Calu3 (cell line): ENCODE measurements at regions of chr3 and their contacts with region 1.

Region 1: GRCh38 chr3:185815391-185816282 is 9.2 kb downstream of the IGF2BP2 start:
- DNase-seq: no peak
- H3K4me3 Mint-ChIP-seq: peak overlapping the region; percentile 17
- H3K27ac Mint-ChIP-seq: peak overlapping the region; percentile 28
- H3K4me1 Mint-ChIP-seq: peaks cover 72% of the 10 kb centered on the region
- H3K27me3 Mint-ChIP-seq: no peaks in the 10 kb centered on the region
- CTCF ChIP-seq: no peak

Region 2: DNA sequence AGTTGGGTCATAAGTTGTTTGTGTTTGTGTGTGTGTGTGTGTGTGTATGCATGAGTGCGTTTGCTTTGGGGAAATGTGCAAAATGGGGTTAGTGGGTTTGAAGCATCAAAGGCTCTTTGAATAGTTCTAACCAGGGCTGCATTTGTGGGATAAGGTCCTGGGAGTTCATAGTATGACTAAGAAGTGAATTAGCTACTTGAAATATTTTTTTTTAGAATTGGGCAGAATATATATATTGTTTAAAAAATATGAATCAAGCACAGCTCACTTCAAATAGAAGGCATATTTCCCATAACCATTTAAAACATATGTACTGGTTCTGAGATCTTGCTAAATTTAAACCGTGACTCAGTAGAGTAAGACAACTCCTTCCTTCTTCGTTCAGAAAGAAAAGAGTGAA is 33.9 kb before region 1 on chr3:
- CTCF ChIA-PET with region 1: no interaction called
- intact Hi-C with region 1: loop called (anchors 5 kb)
- DNase-seq: no peak
- H3K4me3 Mint-ChIP-seq: no peak overlapping the region
- H3K27ac Mint-ChIP-seq: no peak overlapping the region
- H3K4me1 Mint-ChIP-seq: peaks cover 76% of the 10 kb centered on the region
- H3K27me3 Mint-ChIP-seq: no peaks in the 10 kb centered on the region
- CTCF ChIP-seq: no peak

Region 3: GRCh38 chr3:185796431-185797107 is 19.1 kb before region 1 on chr3:
- CTCF ChIA-PET with region 1: interaction called, 3 read pairs
- intact Hi-C with region 1: loop called (anchors 2 kb)
- DNase-seq: peak; percentile 73
- H3K4me3 Mint-ChIP-seq: peak overlapping the region; percentile 49
- H3K27ac Mint-ChIP-seq: peak overlapping the region; percentile 98
- H3K4me1 Mint-ChIP-seq: peaks cover 73% of the 10 kb centered on the region
- H3K27me3 Mint-ChIP-seq: no peaks in the 10 kb centered on the region
- CTCF ChIP-seq: no peak